ENCODE measurements at regions of chr17 and their contacts with region 1.

Region 1: GRCh38 chr17:61361084-61361483 is 38.6 kb upstream of the TBX2 start:
- DNase-seq: peak in 1 of 2 experiments; percentile 83
- H3K4me3 ChIP-seq: no peak overlapping the region
- H3K27ac ChIP-seq: no peak overlapping the region
- H3K4me1 ChIP-seq: peaks cover 45% of the 10 kb centered on the region
- H3K27me3 ChIP-seq: no peaks in the 10 kb centered on the region
- CTCF ChIP-seq: no peak

Region 2: GRCh38 chr17:61326330-61326729 is 34.8 kb before region 1 on chr17:
- CTCF ChIA-PET with region 1: no interaction called
- POLR2A ChIA-PET with region 1: interaction called, 30 read pairs
- intact Hi-C with region 1: no loop called
- DNase-seq: no peak
- H3K4me3 ChIP-seq: no peak overlapping the region
- H3K27ac ChIP-seq: no peak overlapping the region
- H3K4me1 ChIP-seq: no peaks in the 10 kb centered on the region
- H3K27me3 ChIP-seq: no peaks in the 10 kb centered on the region
- CTCF ChIP-seq: no peak

Measured in PC-9 (cell line).